CD8-positive, alpha-beta T cell (primary cell): ENCODE measurements at regions of chr11 and their contacts with region 1.

Region 1: DNA sequence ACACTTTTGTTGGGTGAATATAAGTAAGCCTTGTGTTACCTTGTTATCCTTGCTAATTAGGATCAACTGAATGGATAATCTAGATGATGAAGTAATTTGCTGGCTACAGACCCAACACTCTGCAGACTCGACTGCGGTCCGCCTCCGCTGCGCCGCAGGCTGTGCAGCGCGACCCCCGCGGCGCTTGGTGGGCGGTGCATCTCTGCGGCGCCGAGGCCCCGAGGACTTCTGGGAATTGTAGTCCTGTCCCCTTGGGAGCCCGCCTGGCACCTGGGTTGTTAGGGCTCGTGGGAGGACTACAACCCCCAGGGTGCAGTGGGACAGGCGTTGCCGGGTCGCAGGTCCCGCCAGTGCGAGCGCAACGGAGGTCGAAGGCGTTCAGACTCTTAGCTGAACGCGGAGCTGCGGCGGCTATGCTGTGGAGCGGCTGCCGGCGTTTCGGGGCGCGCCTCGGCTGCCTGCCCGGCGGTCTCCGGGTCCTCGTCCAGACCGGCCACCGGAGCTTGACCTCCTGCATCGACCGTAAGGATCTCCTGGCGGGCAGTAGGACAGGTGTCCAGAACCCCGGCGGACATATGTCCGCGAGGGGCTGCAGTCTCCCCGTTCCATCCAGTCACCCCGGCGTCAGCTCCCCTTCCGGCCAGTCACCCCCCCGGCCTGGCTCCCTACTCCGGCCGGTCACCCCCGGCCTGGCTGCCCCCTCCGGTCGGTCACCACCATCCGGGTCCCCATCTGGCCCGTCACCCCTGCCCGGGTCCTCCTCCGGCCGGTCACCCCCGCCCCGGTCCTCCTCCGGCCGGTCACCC is at the starts of genes ACAD8 and THYN1:
- DNase-seq: peak; percentile 92 to 98 (median 96)
- ATAC-seq: peak; percentile 99
- H3K4me3 ChIP-seq: peak within 1 kb of the TSS; percentile 88 to 91
- H3K4me3 Mint-ChIP-seq: peak within 1 kb of the TSS; percentile 92
- H3K27ac ChIP-seq: peak within 1 kb of the TSS; percentile 52 to 75
- H3K27ac Mint-ChIP-seq: peak within 1 kb of the TSS; percentile 94
- H3K4me1 ChIP-seq: peaks cover 12% of the 10 kb centered on the region
- H3K4me1 Mint-ChIP-seq: peaks cover 36% of the 10 kb centered on the region
- H3K27me3 ChIP-seq: no peaks in the 10 kb centered on the region
- H3K27me3 Mint-ChIP-seq: no peaks in the 10 kb centered on the region
- CTCF ChIP-seq: no peak
- total RNA-seq, gene ACAD8: 19.5 to 20.3 TPM
- total RNA-seq, gene THYN1: 27.1 to 31.5 TPM

Region 2: GRCh38 chr11:133669371-133670053 is 583.9 kb before region 1 on chr11:
- CTCF ChIA-PET with region 1: no interaction called
- POLR2A ChIA-PET with region 1: no interaction called
- intact Hi-C with region 1: no loop called
- DNase-seq: no peak
- ATAC-seq: no peak
- H3K4me3 ChIP-seq: no peak overlapping the region
- H3K4me3 Mint-ChIP-seq: no peak overlapping the region
- H3K27ac ChIP-seq: no peak overlapping the region
- H3K27ac Mint-ChIP-seq: no peak overlapping the region
- H3K4me1 ChIP-seq: no peaks in the 10 kb centered on the region
- H3K4me1 Mint-ChIP-seq: no peaks in the 10 kb centered on the region
- H3K27me3 ChIP-seq: no peaks in the 10 kb centered on the region
- H3K27me3 Mint-ChIP-seq: peaks cover 4% of the 10 kb centered on the region
- CTCF ChIP-seq: no peak

Region 3: GRCh38 chr11:133947321-133947756 is 306.1 kb before region 1 on chr11:
- CTCF ChIA-PET with region 1: no interaction called
- POLR2A ChIA-PET with region 1: no interaction called
- intact Hi-C with region 1: loop called (anchors 10 kb)
- DNase-seq: peak; percentile 41 to 81 (median 68)
- ATAC-seq: peak; percentile 32
- H3K4me3 ChIP-seq: peak overlapping the region in 1 of 2 experiments; percentile 7
- H3K4me3 Mint-ChIP-seq: peak overlapping the region; percentile 60
- H3K27ac ChIP-seq: no peak overlapping the region
- H3K27ac Mint-ChIP-seq: peak overlapping the region; percentile 79
- H3K4me1 ChIP-seq: peaks cover 58% of the 10 kb centered on the region
- H3K4me1 Mint-ChIP-seq: peaks cover 51% of the 10 kb centered on the region
- H3K27me3 ChIP-seq: peaks cover 0 to 10% of the 10 kb centered on the region in 2 experiments
- H3K27me3 Mint-ChIP-seq: no peaks in the 10 kb centered on the region
- CTCF ChIP-seq: peak; percentile 24

Region 4: DNA sequence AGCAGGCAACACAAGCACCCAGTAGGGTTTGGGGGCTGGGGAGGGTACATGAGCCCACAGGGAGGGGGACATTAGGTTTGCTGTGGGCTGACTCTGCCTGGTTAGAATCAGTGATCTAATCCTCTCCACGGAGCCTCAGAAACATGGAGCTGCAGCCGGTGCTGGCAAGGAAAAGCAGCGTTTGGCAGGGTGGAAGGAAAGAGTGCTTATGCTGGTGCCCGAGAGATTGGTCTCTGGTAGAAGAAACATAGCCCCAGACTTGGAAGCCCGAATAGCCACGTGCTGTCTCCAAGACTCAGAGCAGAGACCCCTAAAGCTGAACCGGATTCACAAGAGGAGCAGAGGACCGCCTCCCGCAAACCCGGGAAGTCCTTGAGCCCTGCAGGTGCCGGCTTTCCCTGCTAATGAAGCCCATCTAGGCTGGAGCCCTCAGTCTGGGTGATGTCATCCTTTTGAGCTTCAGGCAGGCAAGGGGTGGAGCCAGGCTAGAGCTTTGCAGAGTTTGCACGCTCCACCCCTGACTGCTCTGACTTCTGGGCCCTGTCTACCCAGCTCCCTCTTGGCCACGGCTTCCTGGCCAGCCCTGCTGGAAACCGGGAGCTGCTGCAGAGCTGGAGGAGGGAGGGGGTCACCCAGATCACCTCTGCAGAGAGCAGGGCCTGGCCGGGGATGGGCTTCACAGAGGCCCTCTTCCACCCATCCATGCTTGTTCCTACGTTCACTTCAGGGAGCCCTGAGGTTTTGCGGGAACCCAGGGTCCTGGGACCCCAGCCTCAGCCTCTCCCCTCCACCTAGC is 219.5 kb before region 1 on chr11:
- CTCF ChIA-PET with region 1: no interaction called
- POLR2A ChIA-PET with region 1: interaction called, 3 read pairs
- intact Hi-C with region 1: loop called (anchors 10 kb)
- DNase-seq: peak; percentile 31 to 86 (median 74)
- ATAC-seq: peak; percentile 84
- H3K4me3 ChIP-seq: peak overlapping the region; percentile 26 to 55
- H3K4me3 Mint-ChIP-seq: peak overlapping the region; percentile 76
- H3K27ac ChIP-seq: peak overlapping the region; percentile 57 to 65
- H3K27ac Mint-ChIP-seq: peak overlapping the region; percentile 92
- H3K4me1 ChIP-seq: peaks cover 72% of the 10 kb centered on the region
- H3K4me1 Mint-ChIP-seq: peaks cover 75% of the 10 kb centered on the region
- H3K27me3 ChIP-seq: no peaks in the 10 kb centered on the region
- H3K27me3 Mint-ChIP-seq: no peaks in the 10 kb centered on the region
- CTCF ChIP-seq: no peak

Region 5: DNA sequence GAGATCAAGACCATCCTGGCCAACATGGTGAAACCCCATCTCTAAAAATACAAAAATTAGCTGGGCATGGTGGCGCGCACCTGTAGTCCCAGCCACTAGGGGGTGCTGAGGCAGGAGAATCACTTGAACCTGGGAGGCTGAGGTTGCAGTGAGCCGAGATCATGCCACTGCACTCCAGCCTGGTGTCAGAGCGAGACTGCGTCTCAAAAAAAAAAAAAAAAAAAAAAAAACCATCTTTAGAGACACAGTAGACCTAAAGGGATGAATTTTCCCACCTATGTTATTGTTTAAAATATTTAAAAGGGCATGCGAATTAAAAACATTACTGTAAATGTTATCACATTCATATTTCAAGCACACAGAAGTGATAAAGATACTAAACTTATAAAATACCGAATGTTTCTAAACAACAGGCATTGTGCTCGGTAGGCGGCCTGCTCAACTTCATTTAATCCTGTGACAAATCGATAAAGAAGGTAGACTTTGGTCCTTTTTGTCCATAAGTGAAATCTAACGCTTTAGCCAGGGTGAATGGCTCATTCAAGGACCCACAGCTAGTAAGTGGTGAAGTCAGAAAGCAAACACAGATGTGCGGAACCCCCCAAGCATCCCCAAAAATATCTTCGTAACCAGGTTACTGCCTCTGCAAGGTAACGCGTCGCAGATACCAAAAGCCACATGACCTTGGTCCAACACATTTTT is 45.7 kb before region 1 on chr11:
- CTCF ChIA-PET with region 1: interaction called, 4 read pairs
- POLR2A ChIA-PET with region 1: interaction called, 3 read pairs
- intact Hi-C with region 1: loop called in 1 of 2 experiments (anchors 1 kb)
- DNase-seq: peak; percentile 37 to 76 (median 69)
- ATAC-seq: peak; percentile 36
- H3K4me3 ChIP-seq: no peak overlapping the region
- H3K4me3 Mint-ChIP-seq: no peak overlapping the region
- H3K27ac ChIP-seq: no peak overlapping the region
- H3K27ac Mint-ChIP-seq: no peak overlapping the region
- H3K4me1 ChIP-seq: no peaks in the 10 kb centered on the region
- H3K4me1 Mint-ChIP-seq: peaks cover 2% of the 10 kb centered on the region
- H3K27me3 ChIP-seq: no peaks in the 10 kb centered on the region
- H3K27me3 Mint-ChIP-seq: no peaks in the 10 kb centered on the region
- CTCF ChIP-seq: peak; percentile 92

Region 6: GRCh38 chr11:134275534-134276395 is 22.4 kb after region 1 on chr11 and contains the start of gene GLB1L3:
- CTCF ChIA-PET with region 1: interaction called, 10 read pairs
- POLR2A ChIA-PET with region 1: interaction called, 8 read pairs
- intact Hi-C with region 1: loop called (anchors 1 to 2 kb)
- DNase-seq: peak; percentile 54 to 88 (median 78)
- ATAC-seq: peak; percentile 92
- H3K4me3 ChIP-seq: peak within 1 kb of the TSS; percentile 64 to 65
- H3K4me3 Mint-ChIP-seq: peak within 1 kb of the TSS; percentile 90
- H3K27ac ChIP-seq: peak within 1 kb of the TSS; percentile 32 to 63
- H3K27ac Mint-ChIP-seq: peak within 1 kb of the TSS; percentile 81
- H3K4me1 ChIP-seq: peaks cover 27% of the 10 kb centered on the region
- H3K4me1 Mint-ChIP-seq: peaks cover 46% of the 10 kb centered on the region
- H3K27me3 ChIP-seq: peaks cover 0 to 3% of the 10 kb centered on the region in 2 experiments
- H3K27me3 Mint-ChIP-seq: peaks cover 8% of the 10 kb centered on the region
- CTCF ChIP-seq: peak; percentile 65
- total RNA-seq, gene GLB1L3: 0.58 to 0.87 TPM

Region 7: GRCh38 chr11:134578807-134579723 is 325.7 kb after region 1 on chr11:
- CTCF ChIA-PET with region 1: no interaction called
- POLR2A ChIA-PET with region 1: no interaction called
- intact Hi-C with region 1: no loop called
- DNase-seq: no peak
- ATAC-seq: no peak
- H3K4me3 ChIP-seq: no peak overlapping the region
- H3K4me3 Mint-ChIP-seq: no peak overlapping the region
- H3K27ac ChIP-seq: no peak overlapping the region
- H3K27ac Mint-ChIP-seq: no peak overlapping the region
- H3K4me1 ChIP-seq: peaks cover 7% of the 10 kb centered on the region
- H3K4me1 Mint-ChIP-seq: peaks cover 11% of the 10 kb centered on the region
- H3K27me3 ChIP-seq: no peaks in the 10 kb centered on the region
- H3K27me3 Mint-ChIP-seq: peaks cover 15% of the 10 kb centered on the region
- CTCF ChIP-seq: no peak